Naive thymus-derived CD4-positive, alpha-beta T cell (primary cell): ENCODE measurements at regions of chr11 and their contacts with region 1.

Region 1: GRCh38 chr11:925496-926321 is at the start of gene AP2A2:
- DNase-seq: peak; percentile 85 to 98 (median 93)
- ATAC-seq: peak; percentile 94
- H3K4me3 ChIP-seq: peak within 1 kb of the TSS; percentile 67
- H3K4me3 Mint-ChIP-seq: peak within 1 kb of the TSS; percentile 77 to 91 (median 86)
- H3K27ac ChIP-seq: peak within 1 kb of the TSS; percentile 74
- H3K27ac Mint-ChIP-seq: peak within 1 kb of the TSS; percentile 20 to 97 (median 89)
- H3K4me1 ChIP-seq: peaks cover 16 to 30% of the 10 kb centered on the region in 2 donors
- H3K4me1 Mint-ChIP-seq: peaks cover 24 to 44% (median 28%) of the 10 kb centered on the region in 7 donors
- H3K27me3 ChIP-seq: no peaks in the 10 kb centered on the region
- H3K27me3 Mint-ChIP-seq: no peaks in the 10 kb centered on the region
- total RNA-seq, gene AP2A2: 70.1 to 93.3 (median 86.4) TPM

Region 2: DNA sequence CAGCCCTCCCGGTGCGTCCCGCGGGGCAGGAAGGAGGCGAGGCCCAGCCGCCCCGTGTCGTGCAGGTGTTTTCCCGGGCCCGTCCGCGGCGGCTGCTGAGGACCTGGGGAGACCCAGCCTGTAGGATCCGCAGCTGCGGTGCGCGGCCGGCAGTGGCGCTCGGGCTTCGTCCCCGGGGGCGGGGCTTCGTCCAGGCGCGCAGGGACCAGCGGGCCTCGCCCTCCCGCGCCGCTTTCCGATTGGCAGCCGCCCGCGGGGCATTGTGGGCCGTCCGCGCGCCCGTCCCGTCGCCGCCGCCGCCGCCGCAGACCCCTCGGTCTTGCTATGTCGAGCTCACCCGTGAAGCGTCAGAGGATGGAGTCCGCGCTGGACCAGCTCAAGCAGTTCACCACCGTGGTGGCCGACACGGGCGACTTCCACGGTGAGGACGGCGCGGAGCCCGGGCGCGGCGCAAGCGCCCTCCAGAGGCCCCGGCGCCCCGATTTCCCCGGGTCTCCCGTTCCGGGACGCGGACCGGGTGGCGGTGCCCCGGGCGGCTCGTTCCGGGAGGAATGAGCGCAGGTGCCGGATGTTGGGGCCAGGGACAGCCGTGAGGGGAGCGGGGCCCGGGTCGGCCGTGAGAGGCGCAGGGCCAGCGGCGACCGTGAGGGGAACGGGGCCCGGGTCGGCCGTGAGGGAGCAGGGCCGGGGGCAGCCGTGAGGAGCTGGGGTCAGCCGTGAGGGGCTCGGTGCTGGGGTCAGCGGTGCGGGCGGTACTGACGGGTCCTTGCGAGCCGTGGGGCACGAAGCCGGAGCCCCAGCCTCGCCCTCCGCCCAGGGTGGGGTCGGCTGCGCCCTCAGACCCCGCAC is 178.3 kb before region 1 on chr11 and contains the start of gene TALDO1:
- CTCF ChIA-PET with region 1: no interaction called
- POLR2A ChIA-PET with region 1: no interaction called
- intact Hi-C with region 1: loop called in 1 of 2 experiments (anchors 5 kb)
- DNase-seq: peak; percentile 54 to 96 (median 60)
- ATAC-seq: peak; percentile 92
- H3K4me3 ChIP-seq: peak within 1 kb of the TSS; percentile 67
- H3K4me3 Mint-ChIP-seq: peak within 1 kb of the TSS; percentile 80 to 93 (median 88)
- H3K27ac ChIP-seq: peak within 1 kb of the TSS; percentile 80
- H3K27ac Mint-ChIP-seq: peak within 1 kb of the TSS; percentile 73 to 90 (median 83)
- H3K4me1 ChIP-seq: peaks cover 10% of the 10 kb centered on the region in 2 donors
- H3K4me1 Mint-ChIP-seq: peaks cover 5 to 28% (median 19%) of the 10 kb centered on the region in 7 donors
- H3K27me3 ChIP-seq: no peaks in the 10 kb centered on the region
- H3K27me3 Mint-ChIP-seq: no peaks in the 10 kb centered on the region
- total RNA-seq, gene TALDO1: 61.4 to 272 (median 90.3) TPM

Region 3: DNA sequence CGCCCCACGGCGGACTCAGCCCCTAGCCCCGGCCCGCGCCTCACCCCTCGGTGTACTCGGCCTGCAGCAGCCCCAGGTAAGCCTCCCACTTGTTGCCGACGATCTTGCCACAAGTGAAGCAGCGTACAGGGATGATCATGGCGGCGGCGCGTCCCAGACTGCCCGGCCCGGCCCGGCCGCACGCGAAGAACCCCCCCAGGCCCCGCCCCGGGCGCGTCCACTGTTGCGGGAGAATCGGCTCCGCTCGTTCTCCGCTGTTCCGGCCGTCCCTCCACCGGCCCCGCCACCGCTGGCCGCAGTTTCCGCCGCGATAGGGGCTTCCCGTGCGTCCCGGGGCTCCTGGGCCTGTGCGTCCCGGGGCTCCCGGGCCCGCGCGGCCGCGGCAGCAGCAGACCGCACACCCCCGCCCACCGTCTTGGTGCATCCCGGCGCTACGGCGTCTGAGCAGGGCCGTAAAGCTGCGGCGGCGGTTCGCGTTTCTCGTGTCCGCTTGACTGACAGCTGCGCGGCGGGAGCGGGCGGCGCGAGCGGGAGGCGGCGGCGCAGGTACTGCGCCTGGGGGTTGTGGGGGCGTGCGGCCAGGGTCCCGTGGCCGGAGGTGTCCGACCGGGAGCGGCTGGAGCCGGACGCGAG is 83.2 kb before region 1 on chr11 and contains the starts of genes POLR2L and TSPAN4:
- CTCF ChIA-PET with region 1: no interaction called
- POLR2A ChIA-PET with region 1: no interaction called
- intact Hi-C with region 1: loop called (anchors 1 to 2 kb)
- DNase-seq: peak; percentile 76 to 97 (median 81)
- ATAC-seq: peak; percentile 86
- H3K4me3 ChIP-seq: peak within 1 kb of the TSS; percentile 83
- H3K4me3 Mint-ChIP-seq: peak within 1 kb of the TSS; percentile 74 to 89 (median 86)
- H3K27ac ChIP-seq: peak within 1 kb of the TSS; percentile 89
- H3K27ac Mint-ChIP-seq: peak within 1 kb of the TSS; percentile 28 to 89 (median 70)
- H3K4me1 ChIP-seq: peaks cover 16 to 21% of the 10 kb centered on the region in 2 donors
- H3K4me1 Mint-ChIP-seq: peaks cover 5 to 36% (median 18%) of the 10 kb centered on the region in 7 donors
- H3K27me3 ChIP-seq: no peaks in the 10 kb centered on the region
- H3K27me3 Mint-ChIP-seq: peaks cover 0 to 2% (median 0%) of the 10 kb centered on the region in 5 donors
- total RNA-seq, gene POLR2L: 31.2 to 93.3 (median 44.9) TPM
- total RNA-seq, gene TSPAN4: 4.8 to 12.6 (median 6.6) TPM

Region 4: GRCh38 chr11:910589-911195 is 15.0 kb before region 1 on chr11 and contains the start of gene CHID1:
- CTCF ChIA-PET with region 1: no interaction called
- POLR2A ChIA-PET with region 1: interaction called, 6 read pairs
- intact Hi-C with region 1: loop called (anchors 1 kb)
- DNase-seq: peak; percentile 60 to 94 (median 73)
- ATAC-seq: peak; percentile 98
- H3K4me3 ChIP-seq: peak within 1 kb of the TSS; percentile 68
- H3K4me3 Mint-ChIP-seq: peak within 1 kb of the TSS; percentile 82 to 99 (median 90)
- H3K27ac ChIP-seq: peak within 1 kb of the TSS; percentile 79
- H3K27ac Mint-ChIP-seq: peak within 1 kb of the TSS; percentile 73 to 97 (median 86)
- H3K4me1 ChIP-seq: peaks cover 4 to 10% of the 10 kb centered on the region in 2 donors
- H3K4me1 Mint-ChIP-seq: peaks cover 15 to 24% (median 20%) of the 10 kb centered on the region in 7 donors
- H3K27me3 ChIP-seq: no peaks in the 10 kb centered on the region
- H3K27me3 Mint-ChIP-seq: no peaks in the 10 kb centered on the region
- total RNA-seq, gene CHID1: 30.8 to 56.3 (median 53.0) TPM

Region 5: GRCh38 chr11:970319-970871 is 44.7 kb after region 1 on chr11:
- CTCF ChIA-PET with region 1: no interaction called
- POLR2A ChIA-PET with region 1: no interaction called
- intact Hi-C with region 1: loop called (anchors 2 to 5 kb)
- DNase-seq: peak in 6 of 9 donors; percentile 7 to 34 (median 19)
- ATAC-seq: peak; percentile 62
- H3K4me3 ChIP-seq: no peak overlapping the region
- H3K4me3 Mint-ChIP-seq: peak overlapping the region in 9 of 10 donors; percentile 18 to 76 (median 62)
- H3K27ac ChIP-seq: peak overlapping the region; percentile 27
- H3K27ac Mint-ChIP-seq: peak overlapping the region; percentile 15 to 95 (median 81)
- H3K4me1 ChIP-seq: peaks cover 12 to 14% of the 10 kb centered on the region in 2 donors
- H3K4me1 Mint-ChIP-seq: peaks cover 19 to 52% (median 37%) of the 10 kb centered on the region in 7 donors
- H3K27me3 ChIP-seq: no peaks in the 10 kb centered on the region
- H3K27me3 Mint-ChIP-seq: no peaks in the 10 kb centered on the region

Region 6: DNA sequence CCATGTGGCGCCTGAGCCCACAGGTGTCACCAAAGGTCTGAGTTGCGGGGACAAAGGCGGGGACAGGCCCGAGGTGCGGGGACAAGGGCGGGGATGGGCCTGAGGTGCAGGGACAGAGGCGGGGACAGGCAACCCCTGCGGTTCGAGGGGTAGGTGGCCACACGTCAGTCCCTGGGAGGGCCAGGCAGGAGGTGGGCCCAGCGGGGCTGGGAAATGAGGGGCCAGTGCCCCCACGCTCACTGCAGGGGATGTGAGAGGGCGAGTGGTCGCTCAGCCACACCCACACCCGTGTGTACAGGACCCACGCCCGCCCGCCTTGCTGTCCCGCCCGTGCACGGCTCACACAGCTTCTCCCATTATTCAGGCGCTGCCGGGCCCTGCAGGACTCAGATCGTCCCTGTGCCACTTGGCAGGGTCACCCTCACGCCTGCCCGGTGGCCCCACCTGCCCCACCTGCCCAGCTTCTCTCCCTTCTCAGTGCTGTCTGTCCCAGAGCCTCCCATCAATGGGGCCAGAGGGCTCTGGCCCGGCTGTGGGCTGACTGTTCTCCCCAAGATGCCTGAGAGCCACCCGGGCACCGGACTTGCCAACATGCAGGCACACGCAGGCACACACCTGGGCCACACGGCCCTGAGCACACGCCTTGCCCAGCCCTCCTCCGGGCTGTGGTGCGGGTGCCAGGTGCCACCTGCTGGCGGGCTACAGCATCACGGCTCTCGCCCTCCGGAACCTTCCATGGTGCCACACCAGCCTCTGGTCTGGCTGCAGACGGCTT is 125.1 kb after region 1 on chr11:
- CTCF ChIA-PET with region 1: interaction called, 3 read pairs
- POLR2A ChIA-PET with region 1: no interaction called
- intact Hi-C with region 1: loop called (anchors 1 kb)
- DNase-seq: peak; percentile 54 to 78 (median 68)
- ATAC-seq: peak; percentile 95
- H3K4me3 ChIP-seq: no peak overlapping the region
- H3K4me3 Mint-ChIP-seq: no peak overlapping the region
- H3K27ac ChIP-seq: no peak overlapping the region
- H3K27ac Mint-ChIP-seq: no peak overlapping the region
- H3K4me1 ChIP-seq: no peaks in the 10 kb centered on the region
- H3K4me1 Mint-ChIP-seq: peaks cover 0 to 5% (median 0%) of the 10 kb centered on the region in 7 donors
- H3K27me3 ChIP-seq: peaks cover 0 to 5% of the 10 kb centered on the region in 2 donors
- H3K27me3 Mint-ChIP-seq: peaks cover 0 to 11% (median 4%) of the 10 kb centered on the region in 5 donors